Right ventricle myocardium superior (tissue), 1 donor: ENCODE measurements at regions of chr4 and their contacts with region 1.

Region 1: GRCh38 chr4:118888666-118889311 is at the start of gene SYNPO2:
- DNase-seq: peak; percentile 89
- ATAC-seq: peak; percentile 88
- total RNA-seq, gene SYNPO2: 196 TPM

Region 2: DNA sequence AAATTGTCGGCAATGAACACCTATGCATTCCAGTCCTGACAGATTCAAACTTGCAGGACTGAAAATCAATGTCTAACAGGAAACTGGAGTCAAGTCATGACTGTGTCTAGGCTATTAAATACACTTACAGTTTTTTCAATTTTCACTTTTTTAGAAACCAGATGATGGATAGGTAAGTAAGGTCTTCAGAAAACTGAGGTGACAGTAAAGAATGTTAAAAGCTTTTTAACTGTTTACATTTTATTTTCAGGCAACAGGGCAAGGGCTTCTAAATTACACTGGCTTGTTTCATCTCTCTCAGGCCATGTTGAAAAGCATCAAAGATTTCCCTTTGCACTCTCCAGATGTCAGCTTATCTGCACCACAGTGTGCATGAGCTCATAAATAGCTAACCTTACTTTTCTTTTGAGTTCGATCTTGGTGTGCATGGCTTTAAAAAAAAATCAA is 118.0 kb before region 1 on chr4:
- intact Hi-C with region 1: loop called (anchors 2 kb)
- DNase-seq: no peak
- ATAC-seq: peak; percentile 76

Region 3: GRCh38 chr4:118835571-118836300 is 53.1 kb before region 1 on chr4 and contains the start of gene SEC24D:
- intact Hi-C with region 1: loop called (anchors 10 kb)
- DNase-seq: peak; percentile 94
- ATAC-seq: peak; percentile 98
- total RNA-seq, gene SEC24D: 10.2 TPM

Region 4: DNA sequence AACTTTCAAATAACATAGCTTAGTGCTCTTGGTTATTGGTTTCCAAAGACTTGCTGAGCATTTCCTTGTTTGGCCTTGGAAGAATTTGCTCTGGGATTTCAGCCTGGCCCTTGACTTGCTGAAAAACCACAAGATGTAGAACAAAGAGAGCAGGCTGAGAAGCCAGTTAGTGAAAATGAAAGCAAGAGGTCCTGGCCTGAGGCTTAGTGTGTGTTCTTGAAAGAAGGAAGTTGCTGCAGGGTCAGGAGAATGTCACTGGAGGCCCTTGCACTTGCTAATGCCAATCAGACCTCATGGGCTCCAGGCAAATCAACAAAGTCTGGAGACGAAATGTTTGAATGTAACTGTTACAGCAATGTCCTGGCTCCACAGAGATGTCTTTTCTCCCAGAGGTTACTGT is 79.2 kb after region 1 on chr4:
- intact Hi-C with region 1: loop called (anchors 2 kb)
- DNase-seq: peak; percentile 52
- ATAC-seq: peak; percentile 81